A673 (cell line): ENCODE measurements at regions of chr7 and their contacts with region 1.

Region 1: DNA sequence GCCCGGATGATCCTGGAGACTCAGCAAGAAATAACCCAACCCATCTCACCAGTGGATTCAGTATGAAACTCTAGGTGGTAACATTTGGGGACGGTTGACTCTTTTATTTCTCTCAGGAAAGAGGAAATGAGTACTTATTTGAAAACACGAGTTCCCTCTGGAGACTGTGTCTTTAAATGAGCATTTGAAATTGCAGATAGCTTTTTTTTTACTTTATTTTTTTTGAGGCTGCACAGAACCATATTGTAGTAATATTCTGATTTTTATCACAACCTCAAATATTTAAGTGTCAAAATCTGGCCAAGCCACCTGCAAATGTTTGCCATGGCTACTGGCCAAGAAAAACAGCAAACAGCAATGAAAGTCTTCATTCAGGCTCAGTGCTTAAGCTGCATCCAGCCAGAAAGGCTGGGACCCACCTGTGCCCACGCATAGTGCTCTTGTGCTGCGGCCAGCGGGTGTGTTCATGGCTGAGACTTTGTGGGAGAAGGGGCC is 160.8 kb downstream of the CREB5 start:
- DNase-seq: no peak
- H3K4me3 ChIP-seq: no peak overlapping the region
- H3K27ac ChIP-seq: no peak overlapping the region
- H3K4me1 ChIP-seq: peaks cover 21% of the 10 kb centered on the region
- H3K27me3 ChIP-seq: peaks cover 79% of the 10 kb centered on the region
- CTCF ChIP-seq: no peak

Region 2: DNA sequence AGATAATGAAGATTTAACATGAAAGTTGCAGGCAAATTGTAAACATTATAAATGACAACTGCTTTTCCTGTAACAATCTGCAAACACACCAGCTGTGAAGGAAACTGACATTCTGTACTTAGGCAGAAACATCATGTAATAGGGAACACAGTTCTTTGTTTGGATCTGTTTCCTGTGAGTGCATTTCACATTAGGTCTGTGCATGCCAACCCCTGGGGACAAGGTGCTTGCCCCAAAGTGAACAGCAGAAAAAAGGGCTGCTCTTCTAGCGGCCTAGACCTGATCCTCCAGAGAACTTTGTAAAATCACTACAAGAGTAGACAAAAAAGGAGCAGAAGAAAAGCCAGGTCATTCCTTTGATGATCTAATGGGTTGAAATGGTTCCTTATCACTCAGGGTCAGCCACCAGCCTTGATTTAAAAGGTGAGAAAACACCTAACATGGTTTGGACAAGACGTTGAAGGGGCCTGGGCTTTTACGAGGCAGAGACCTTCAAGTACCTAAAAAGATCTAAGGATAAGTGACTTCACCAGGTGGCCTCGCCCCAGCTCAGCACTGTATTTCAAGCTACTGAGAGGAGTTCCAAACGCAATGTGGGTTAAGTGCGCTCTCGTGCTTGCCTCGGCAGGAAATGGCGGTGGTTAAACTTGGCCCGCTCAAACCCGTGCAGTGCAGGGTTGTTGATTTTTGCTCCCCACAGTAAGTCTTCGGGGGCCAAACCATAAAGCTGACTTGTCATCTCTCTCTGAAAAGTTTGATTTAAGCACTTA is 88.9 kb after region 1 on chr7:
- CTCF ChIA-PET with region 1: no interaction called
- POLR2A ChIA-PET with region 1: no interaction called
- intact Hi-C with region 1: no loop called
- DNase-seq: no peak
- H3K4me3 ChIP-seq: no peak overlapping the region
- H3K27ac ChIP-seq: no peak overlapping the region
- H3K4me1 ChIP-seq: no peaks in the 10 kb centered on the region
- H3K27me3 ChIP-seq: peaks cover 6% of the 10 kb centered on the region
- CTCF ChIP-seq: no peak

Region 3: GRCh38 chr7:29274146-29275017 is 701.3 kb after region 1 on chr7:
- CTCF ChIA-PET with region 1: no interaction called
- POLR2A ChIA-PET with region 1: interaction called, 18 read pairs
- intact Hi-C with region 1: no loop called
- DNase-seq: peak; percentile 85
- H3K4me3 ChIP-seq: no peak overlapping the region
- H3K27ac ChIP-seq: peak overlapping the region; percentile 72
- H3K4me1 ChIP-seq: peaks cover 96% of the 10 kb centered on the region
- H3K27me3 ChIP-seq: no peaks in the 10 kb centered on the region
- CTCF ChIP-seq: no peak